GM12878 (cell line): ENCODE measurements at regions of chr2 and their contacts with region 1.

Region 1: GRCh38 chr2:6773007-6773693 is 92.6 kb downstream of the CMPK2 start:
- DNase-seq: no peak
- ATAC-seq: peak; percentile 98
- H3K4me3 ChIP-seq: no peak overlapping the region
- H3K27ac ChIP-seq: no peak overlapping the region
- H3K4me1 ChIP-seq: no peaks in the 10 kb centered on the region
- H3K27me3 ChIP-seq: peaks cover 0 to 2% of the 10 kb centered on the region in 2 experiments; a peak in 1 of 4 replicates
- CTCF ChIP-seq: peak; percentile 89 to 95 (median 90)
- EP300 ChIP-seq: no peak
- POLR2A ChIP-seq: no peak
- RAD21 ChIP-seq: peak; percentile 94

Region 2: GRCh38 chr2:5290900-5291538 is 1482.1 kb before region 1 on chr2:
- CTCF ChIA-PET with region 1: interaction called, 4 read pairs
- POLR2A ChIA-PET with region 1: no interaction called
- RAD21 ChIA-PET with region 1: no interaction called
- SMC1A ChIA-PET with region 1: interaction called, 3 read pairs
- in situ Hi-C with region 1: no loop called
- intact Hi-C with region 1: loop called (anchors 5 kb)
- DNase-seq: no peak
- ATAC-seq: no peak
- H3K4me3 ChIP-seq: no peak overlapping the region
- H3K27ac ChIP-seq: no peak overlapping the region
- H3K4me1 ChIP-seq: no peaks in the 10 kb centered on the region
- H3K27me3 ChIP-seq: no peaks in the 10 kb centered on the region
- CTCF ChIP-seq: 0 out of 6 replicates have a peak, but pooled peaks of 1 of the 3 experiments have one; percentile 6
- EP300 ChIP-seq: no peak
- POLR2A ChIP-seq: no peak
- RAD21 ChIP-seq: no peak

Region 3: DNA sequence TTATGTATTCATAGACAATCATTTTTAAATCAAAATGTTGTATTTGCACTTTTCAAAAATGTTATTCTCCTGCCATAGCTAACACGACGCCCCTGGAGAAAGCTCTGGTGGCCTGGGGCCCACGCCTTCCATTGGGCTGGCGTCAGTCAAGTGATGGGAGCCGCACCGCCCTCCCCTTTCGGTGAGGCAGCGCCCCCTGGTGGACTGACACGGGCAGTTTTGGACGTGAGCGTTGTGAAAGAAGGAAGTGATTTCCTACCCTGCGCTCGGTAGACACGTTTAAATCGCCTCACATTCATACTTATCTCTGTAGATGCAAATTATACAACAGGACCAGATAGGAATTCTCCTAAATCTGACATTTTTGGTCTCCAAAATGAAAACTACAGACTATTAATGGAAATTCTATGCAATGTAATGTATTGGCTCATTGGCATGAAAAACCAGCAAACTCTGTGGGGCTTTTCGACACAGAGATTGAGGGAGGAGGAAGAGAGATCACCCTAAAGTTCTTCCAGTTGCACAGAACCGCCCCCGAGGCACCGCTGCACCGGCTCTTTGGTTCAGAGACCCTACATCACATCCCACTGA is 1407.2 kb before region 1 on chr2:
- CTCF ChIA-PET with region 1: interaction called, 3 read pairs
- POLR2A ChIA-PET with region 1: no interaction called
- RAD21 ChIA-PET with region 1: no interaction called
- SMC1A ChIA-PET with region 1: no interaction called
- in situ Hi-C with region 1: no loop called
- intact Hi-C with region 1: loop called (anchors 5 kb)
- DNase-seq: no peak
- ATAC-seq: peak; percentile 99
- H3K4me3 ChIP-seq: no peak overlapping the region
- H3K27ac ChIP-seq: no peak overlapping the region
- H3K4me1 ChIP-seq: no peaks in the 10 kb centered on the region
- H3K27me3 ChIP-seq: no peaks in the 10 kb centered on the region
- CTCF ChIP-seq: peak; percentile 60 to 66 (median 65)
- EP300 ChIP-seq: no peak
- POLR2A ChIP-seq: no peak
- RAD21 ChIP-seq: peak; percentile 44

Region 4: GRCh38 chr2:6103949-6104348 is 669.2 kb before region 1 on chr2:
- CTCF ChIA-PET with region 1: no interaction called
- POLR2A ChIA-PET with region 1: no interaction called
- RAD21 ChIA-PET with region 1: no interaction called
- SMC1A ChIA-PET with region 1: no interaction called
- in situ Hi-C with region 1: no loop called
- intact Hi-C with region 1: loop called (anchors 10 kb)
- DNase-seq: no peak
- ATAC-seq: peak; percentile 72
- H3K4me3 ChIP-seq: no peak overlapping the region
- H3K27ac ChIP-seq: no peak overlapping the region
- H3K4me1 ChIP-seq: no peaks in the 10 kb centered on the region
- H3K27me3 ChIP-seq: no peaks in the 10 kb centered on the region
- CTCF ChIP-seq: peak in 2 of 3 experiments; percentile 16 to 20; a peak in 1 of 6 replicates
- EP300 ChIP-seq: no peak
- POLR2A ChIP-seq: no peak
- RAD21 ChIP-seq: peak; percentile 28; the same call in 1 of the 2 replicates

Region 5: DNA sequence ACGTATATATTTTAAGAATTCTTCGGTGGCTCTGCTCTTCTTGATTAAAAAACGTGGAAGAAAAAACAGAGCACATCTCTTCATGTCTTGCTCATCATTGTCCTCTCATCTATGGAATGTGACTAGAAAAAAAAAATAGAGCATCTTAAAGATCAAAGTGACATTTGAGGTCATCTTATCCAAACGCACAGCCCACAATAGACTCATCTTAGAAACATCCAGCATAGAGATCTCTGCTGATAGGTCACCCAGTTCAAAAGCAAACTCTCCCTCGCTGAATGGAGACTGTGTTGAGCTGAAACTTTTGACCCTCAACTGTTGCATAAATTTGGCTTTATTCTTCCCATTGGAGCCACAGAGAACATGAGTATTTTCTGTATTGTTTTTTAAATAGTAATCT is 27.4 kb after region 1 on chr2:
- CTCF ChIA-PET with region 1: no interaction called
- POLR2A ChIA-PET with region 1: no interaction called
- RAD21 ChIA-PET with region 1: no interaction called
- SMC1A ChIA-PET with region 1: no interaction called
- in situ Hi-C with region 1: no loop called
- intact Hi-C with region 1: no loop called
- DNase-seq: no peak
- ATAC-seq: no peak
- H3K4me3 ChIP-seq: no peak overlapping the region
- H3K27ac ChIP-seq: no peak overlapping the region
- H3K4me1 ChIP-seq: no peaks in the 10 kb centered on the region
- H3K27me3 ChIP-seq: peaks cover 0 to 4% of the 10 kb centered on the region in 2 experiments; a peak in 2 of 4 replicates
- CTCF ChIP-seq: no peak
- EP300 ChIP-seq: no peak
- POLR2A ChIP-seq: no peak
- RAD21 ChIP-seq: no peak